SK-N-SH (cell line): ENCODE measurements at regions of chr1 and their contacts with region 1.

Region 1: DNA sequence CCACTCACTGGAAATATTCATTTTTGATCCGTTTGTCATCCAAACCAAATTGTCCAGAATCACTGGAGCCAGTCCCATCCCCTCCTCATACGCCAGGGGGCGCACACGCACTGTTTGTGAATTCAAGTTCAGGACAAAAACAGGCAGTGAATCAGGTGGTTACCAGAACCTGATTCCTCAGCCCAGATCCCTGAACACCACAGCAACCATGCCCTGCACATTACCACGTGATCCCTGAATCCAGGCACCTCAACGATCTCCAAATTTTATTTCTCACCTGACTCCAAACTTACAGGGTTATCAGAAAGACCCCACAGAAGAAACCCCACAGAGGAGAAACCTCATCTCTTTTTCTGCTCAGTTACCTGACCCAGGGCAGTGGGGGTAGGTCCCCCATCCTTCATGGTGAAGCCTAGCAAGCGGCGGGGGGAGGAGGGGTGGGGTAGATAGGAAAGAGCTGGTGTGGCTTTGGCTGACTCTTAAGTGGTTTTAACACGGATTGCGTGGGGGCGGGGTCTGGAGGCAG is 1.4 kb upstream of the PTPRF start:
- DNase-seq: peak; percentile 86
- H3K4me3 ChIP-seq: peak overlapping the region in 1 of 2 experiments; percentile 45; a peak in 1 of 4 replicates
- H3K27ac ChIP-seq: no peak overlapping the region
- H3K4me1 ChIP-seq: peaks cover 4 to 24% of the 10 kb centered on the region in 2 experiments; a peak in 3 of 4 replicates
- H3K27me3 ChIP-seq: no peaks in the 10 kb centered on the region
- CTCF ChIP-seq: peak; percentile 95
- EP300 ChIP-seq: no peak
- RAD21 ChIP-seq: peak; percentile 98

Region 2: DNA sequence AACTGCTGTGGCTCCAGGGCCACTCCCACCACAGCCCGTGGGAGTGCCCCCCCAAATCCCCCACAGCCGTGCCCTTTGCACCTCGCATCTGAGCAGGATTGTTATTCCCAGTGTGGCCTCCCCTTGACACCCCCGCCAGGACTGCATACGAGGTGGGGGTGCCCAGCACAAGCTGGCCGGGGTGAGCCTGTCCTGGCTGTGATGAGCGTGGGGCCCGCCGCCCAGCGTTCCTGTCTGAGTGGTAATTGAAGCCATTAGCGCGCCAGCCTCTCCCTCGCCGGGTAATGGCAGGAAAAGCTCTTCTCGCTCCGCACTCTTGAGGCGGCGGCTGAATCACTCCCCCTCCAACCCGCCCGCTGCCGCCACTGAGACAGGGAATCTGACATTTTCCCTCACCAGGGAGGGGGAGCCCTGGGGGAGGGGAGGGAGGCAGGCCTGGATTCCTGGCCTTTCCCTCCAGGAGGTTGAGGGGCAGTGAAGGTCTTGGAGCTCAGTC is 29.1 kb after region 1 on chr1:
- CTCF ChIA-PET with region 1: interaction called, 15 read pairs
- POLR2A ChIA-PET with region 1: no interaction called
- DNase-seq: peak; percentile 88
- H3K4me3 ChIP-seq: peak overlapping the region in 1 of 2 experiments; percentile 38; a peak in 1 of 4 replicates
- H3K27ac ChIP-seq: peak overlapping the region; percentile 65 to 78
- H3K4me1 ChIP-seq: peaks cover 12 to 27% of the 10 kb centered on the region in 2 experiments; a peak in 3 of 4 replicates
- H3K27me3 ChIP-seq: no peaks in the 10 kb centered on the region
- CTCF ChIP-seq: no peak
- EP300 ChIP-seq: no peak
- RAD21 ChIP-seq: no peak

Region 3: DNA sequence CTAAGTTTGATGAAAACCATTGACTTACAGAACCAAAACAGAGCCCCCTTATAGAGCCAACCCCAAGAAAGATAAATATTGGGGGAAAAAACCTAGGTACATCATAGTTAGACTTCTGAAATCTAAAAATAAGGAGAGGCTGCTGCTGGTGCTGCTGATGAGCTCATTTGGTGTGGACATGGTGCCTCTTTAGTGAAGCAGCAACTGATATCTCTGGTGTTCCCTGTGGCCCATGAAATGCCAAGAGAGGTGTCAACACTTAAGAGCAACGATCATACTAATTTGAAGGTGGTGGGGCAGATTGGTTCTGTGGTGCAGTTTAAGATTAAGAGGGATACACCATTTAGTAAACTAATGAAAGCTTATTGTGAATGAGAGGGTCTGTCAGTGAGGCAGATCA is 213.9 kb after region 1 on chr1:
- CTCF ChIA-PET with region 1: no interaction called
- POLR2A ChIA-PET with region 1: no interaction called
- DNase-seq: no peak
- H3K4me3 ChIP-seq: no peak overlapping the region
- H3K27ac ChIP-seq: no peak overlapping the region
- H3K4me1 ChIP-seq: no peaks in the 10 kb centered on the region
- H3K27me3 ChIP-seq: no peaks in the 10 kb centered on the region
- CTCF ChIP-seq: no peak
- EP300 ChIP-seq: no peak
- RAD21 ChIP-seq: no peak